A549 (cell line): ENCODE measurements at regions of chr12 and their contacts with region 1.

Region 1: GRCh38 chr12:56127888-56128669 is at the start of gene ESYT1:
- DNase-seq: peak; percentile 99 to 100
- ATAC-seq: peak; percentile 83 to 95
- H3K4me3 ChIP-seq: peak within 1 kb of the TSS; percentile 76
- H3K27ac ChIP-seq: peak within 1 kb of the TSS; percentile 87 to 89
- H3K4me1 ChIP-seq: peaks cover 25% of the 10 kb centered on the region
- CTCF ChIP-seq: no peak
- EP300 ChIP-seq: no peak
- POLR2A ChIP-seq: peak; percentile 69
- RAD21 ChIP-seq: no peak
- polyA plus RNA-seq, gene ESYT1: 72.4 and 91.6 TPM in 2 replicates

Region 2: DNA sequence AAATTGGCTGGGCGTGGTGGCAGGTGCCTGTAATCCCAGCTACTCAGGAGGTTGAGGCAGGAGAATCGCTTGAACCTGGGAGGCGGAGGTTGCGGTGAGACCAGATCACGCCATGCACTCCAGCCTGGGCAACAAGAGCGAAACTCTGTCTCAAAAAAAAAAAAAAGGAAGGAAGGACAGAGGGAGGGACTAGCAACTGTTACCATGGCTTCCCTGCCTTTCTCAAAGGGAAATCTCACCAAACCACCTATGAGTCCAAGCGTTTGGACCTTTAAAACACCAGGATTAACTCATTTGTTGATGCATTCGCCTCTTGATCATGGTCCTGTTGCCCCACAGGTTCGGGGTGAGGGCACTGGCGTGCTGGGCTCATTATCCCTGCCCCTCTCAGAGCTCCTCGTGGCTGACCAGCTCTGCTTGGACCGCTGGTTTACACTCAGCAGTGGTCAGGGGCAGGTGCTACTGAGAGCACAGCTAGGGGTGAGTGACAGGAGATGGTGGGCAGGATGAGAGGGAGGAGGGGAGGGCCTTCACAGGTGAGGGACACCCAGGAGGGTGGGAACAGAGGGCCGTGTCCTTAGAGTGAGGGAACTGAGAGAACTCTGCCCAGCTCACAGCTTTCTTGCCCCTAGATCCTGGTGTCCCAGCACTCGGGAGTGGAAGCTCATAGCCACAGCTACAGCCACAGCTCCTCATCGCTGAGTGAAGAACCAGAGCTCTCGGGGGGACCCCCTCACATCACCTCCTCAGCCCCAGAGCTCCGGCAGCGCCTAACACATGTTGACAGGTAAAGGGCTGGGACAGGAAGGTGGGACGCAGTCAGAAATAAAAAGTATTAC is 14.1 kb after region 1 on chr12:
- CTCF ChIA-PET with region 1: interaction called, 17 read pairs
- POLR2A ChIA-PET with region 1: interaction called, 7 read pairs
- DNase-seq: no peak
- ATAC-seq: 0 out of 6 replicates have a peak, but pooled peaks of 1 of the 2 experiments have one; percentile 19
- H3K4me3 ChIP-seq: no peak overlapping the region
- H3K27ac ChIP-seq: no peak overlapping the region
- H3K4me1 ChIP-seq: no peaks in the 10 kb centered on the region
- CTCF ChIP-seq: no peak
- EP300 ChIP-seq: no peak
- POLR2A ChIP-seq: no peak
- RAD21 ChIP-seq: no peak

Region 3: DNA sequence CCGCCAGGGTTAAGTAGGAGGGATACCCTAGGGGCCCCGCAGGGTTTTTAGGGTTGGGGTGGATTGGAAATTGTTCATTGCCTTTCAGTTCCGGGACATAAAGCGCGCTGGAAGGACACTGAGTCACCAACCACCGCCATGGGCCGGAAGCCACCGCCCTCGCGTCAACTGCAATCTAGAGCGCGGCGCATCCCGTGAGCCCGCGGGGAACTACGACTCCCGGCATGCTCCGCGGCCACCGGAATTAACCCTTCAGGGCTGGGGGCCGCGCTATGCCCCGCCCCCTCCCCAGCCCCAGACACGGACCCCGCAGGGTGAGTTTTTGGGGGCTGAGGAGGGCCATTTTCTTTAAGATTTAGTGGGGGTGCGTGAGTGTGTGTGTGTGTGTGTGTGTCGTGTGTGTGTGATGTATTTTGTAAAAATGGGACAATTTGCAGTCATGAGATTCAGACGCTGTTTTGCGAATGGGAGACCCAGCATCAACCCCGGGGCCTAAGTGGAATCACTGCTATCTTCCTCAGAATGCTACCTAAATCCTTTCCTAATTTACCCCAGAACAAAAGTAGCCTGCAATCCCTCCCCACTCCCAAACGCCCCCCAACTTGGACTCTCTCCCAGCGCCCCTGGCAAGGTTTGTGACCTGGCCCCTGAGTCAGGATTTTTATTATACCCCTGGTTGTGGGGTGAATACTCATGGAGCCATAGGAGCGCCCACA is 24.4 kb after region 1 on chr12 and contains the start of gene MYL6B:
- CTCF ChIA-PET with region 1: interaction called, 98 read pairs
- POLR2A ChIA-PET with region 1: interaction called, 19 read pairs
- DNase-seq: peak; percentile 94
- ATAC-seq: peak; percentile 89 to 93
- H3K4me3 ChIP-seq: peak within 1 kb of the TSS; percentile 53
- H3K27ac ChIP-seq: peak within 1 kb of the TSS; percentile 92 to 93
- H3K4me1 ChIP-seq: peaks cover 21% of the 10 kb centered on the region; the same call in 2 of the 3 replicates
- CTCF ChIP-seq: no peak
- EP300 ChIP-seq: no peak
- POLR2A ChIP-seq: peak; percentile 71
- RAD21 ChIP-seq: no peak
- polyA plus RNA-seq, gene MYL6B: 48.2 and 67.0 TPM in 2 replicates

Region 4: DNA sequence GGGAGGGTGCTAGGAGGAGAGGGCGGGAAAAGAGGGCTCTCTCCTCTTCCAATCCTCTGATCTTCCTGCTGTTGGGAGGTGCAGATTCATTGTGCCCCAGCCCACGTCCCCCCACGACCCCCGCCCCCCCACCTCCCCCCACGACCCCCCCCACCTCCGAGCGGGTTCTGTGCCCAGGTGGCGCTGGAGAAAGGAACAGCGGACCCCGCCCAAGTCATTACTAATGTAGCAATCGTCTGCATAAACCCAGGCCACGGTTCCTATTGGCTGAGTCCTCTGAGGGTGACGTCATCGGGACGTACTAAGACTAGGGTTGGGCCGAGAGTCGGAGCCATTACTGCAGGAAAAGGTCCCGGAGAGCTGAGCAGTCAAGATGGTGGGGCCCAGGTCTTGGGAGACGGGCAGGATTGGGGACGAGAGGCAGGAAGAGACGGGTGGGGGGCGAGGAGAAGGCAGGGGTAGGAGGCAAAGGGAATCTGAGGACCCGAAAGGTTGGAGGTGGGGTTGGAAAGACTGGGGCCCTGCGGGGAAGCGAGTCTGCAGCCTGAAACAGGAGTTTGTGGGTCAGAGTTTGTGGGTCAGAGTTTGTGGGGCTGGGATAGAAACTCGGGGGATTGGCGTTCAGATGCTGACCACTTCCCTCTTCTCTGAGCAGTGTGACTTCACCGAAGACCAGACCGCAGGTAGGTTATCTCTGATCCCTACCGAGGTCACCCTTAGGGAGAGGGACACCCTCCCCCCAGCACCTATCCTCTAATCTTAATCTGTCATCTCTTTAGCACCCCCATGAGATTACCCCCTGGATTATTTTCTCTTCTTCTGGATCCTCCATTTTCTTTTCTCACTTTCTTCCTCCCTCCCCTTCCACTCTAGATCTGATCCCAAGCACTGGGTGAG is 30.2 kb after region 1 on chr12 and contains the start of gene MYL6:
- CTCF ChIA-PET with region 1: interaction called, 98 read pairs
- POLR2A ChIA-PET with region 1: interaction called, 14 read pairs
- DNase-seq: peak; percentile 98 to 99
- ATAC-seq: peak; percentile 87 to 89
- H3K4me3 ChIP-seq: peak within 1 kb of the TSS; percentile 74
- H3K27ac ChIP-seq: peak within 1 kb of the TSS; percentile 90 to 97
- H3K4me1 ChIP-seq: peaks cover 39% of the 10 kb centered on the region
- CTCF ChIP-seq: no peak
- EP300 ChIP-seq: no peak
- POLR2A ChIP-seq: peak; percentile 99
- RAD21 ChIP-seq: no peak
- polyA plus RNA-seq, gene MYL6: 2,280 and 2,307 TPM in 2 replicates